BJ (cell line): ENCODE measurements at regions of chr9 and their contacts with region 1.

Region 1: GRCh38 chr9:86575825-86576525 is 221.8 kb upstream of the TUT7 start:
- DNase-seq: no peak
- H3K4me3 ChIP-seq: no peak overlapping the region
- H3K27me3 ChIP-seq: no peaks in the 10 kb centered on the region; the same call in none of the 2 replicates
- CTCF ChIP-seq: no peak

Region 2: DNA sequence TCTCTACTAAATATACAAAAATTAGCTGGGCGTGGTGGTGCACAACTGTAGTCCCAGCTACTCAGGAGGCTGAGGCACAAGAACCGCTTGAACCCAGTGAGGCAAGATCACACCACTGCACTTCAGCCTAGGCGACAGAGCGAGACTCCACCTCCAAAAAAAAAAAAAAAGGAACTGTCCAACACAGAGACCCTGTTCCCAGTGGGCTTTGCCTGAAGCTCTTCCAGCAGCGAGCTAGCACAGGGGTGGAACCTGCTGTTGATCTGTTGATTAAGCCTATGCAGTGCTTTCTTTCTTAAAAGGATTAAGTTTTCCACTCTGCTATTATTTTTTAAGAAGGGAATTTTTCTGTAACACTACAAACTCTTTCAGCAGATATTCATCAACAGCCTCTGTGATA is 50.8 kb before region 1 on chr9:
- CTCF ChIA-PET with region 1: no interaction called
- POLR2A ChIA-PET with region 1: interaction called, 10 read pairs
- DNase-seq: no peak
- H3K4me3 ChIP-seq: no peak overlapping the region
- H3K27me3 ChIP-seq: peaks cover 2% of the 10 kb centered on the region; the same call in 1 of the 2 replicates
- CTCF ChIP-seq: no peak